Esophagus squamous epithelium (tissue), 5 donors: ENCODE measurements at regions of chr20 and their contacts with region 1.

Region 1: DNA sequence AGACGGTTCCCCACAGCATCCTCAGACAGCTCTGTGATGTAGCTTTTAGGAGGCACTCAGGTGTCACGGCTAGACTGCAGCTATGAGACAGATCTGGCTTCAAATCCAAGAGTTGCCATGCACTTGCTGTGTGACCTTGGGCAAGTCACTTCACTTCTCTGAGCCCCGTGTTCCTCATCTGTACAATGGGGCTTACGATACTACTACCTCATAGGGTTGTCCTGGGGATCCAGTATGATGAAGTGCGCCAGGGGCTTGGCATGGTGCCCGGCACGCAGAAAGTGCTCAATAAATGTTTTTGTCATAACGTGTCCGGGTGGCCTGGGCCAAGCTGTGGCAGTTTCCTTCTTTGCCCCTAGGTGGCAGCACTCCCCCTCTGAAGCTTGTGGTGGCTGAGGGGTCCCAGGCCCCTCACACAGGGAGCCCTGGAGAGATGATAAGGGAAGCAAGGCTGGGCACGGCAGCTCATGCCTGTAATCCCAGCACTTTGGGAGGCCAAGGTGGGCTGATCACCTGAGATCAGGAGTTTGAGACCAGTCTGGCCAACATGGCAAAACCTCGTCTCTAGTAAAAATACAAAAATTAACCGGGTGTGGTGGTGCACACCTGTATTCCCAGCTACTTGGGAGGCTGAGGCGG is 19.1 kb upstream of the CHMP4B start:
- DNase-seq: no peak
- H3K4me3 ChIP-seq: no peak overlapping the region
- H3K27ac ChIP-seq: peak overlapping the region in 1 of 4 donors; percentile 5
- H3K4me1 ChIP-seq: peaks cover 20 to 93% (median 24%) of the 10 kb centered on the region in 3 donors
- H3K27me3 ChIP-seq: no peaks in the 10 kb centered on the region
- CTCF ChIP-seq: peak; percentile 56 to 85 (median 72)
- POLR2A ChIP-seq: no peak

Region 2: DNA sequence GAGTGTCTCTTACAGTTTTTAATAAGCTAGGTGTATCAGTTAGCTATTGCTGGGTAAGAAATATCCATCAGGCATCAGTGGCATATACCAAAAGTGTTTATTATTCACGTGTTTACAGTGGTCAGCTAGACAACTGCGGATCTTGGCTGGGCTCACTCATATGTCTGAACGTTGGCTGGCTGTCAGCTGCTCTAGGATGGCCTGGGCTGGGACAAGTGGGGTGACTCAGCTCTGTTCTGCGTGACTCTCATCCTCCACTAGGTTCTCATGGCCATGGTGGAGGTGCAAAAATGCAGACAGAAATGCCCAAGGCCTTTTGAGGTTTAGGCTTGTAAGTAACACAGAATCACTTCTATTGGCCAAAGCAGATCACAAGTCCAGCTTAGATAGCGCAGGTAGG is 38.3 kb before region 1 on chr20:
- intact Hi-C with region 1: no loop called
- DNase-seq: no peak
- H3K4me3 ChIP-seq: no peak overlapping the region
- H3K27ac ChIP-seq: no peak overlapping the region
- H3K4me1 ChIP-seq: peaks cover 0 to under 1% (median 0%) of the 10 kb centered on the region in 3 donors
- H3K27me3 ChIP-seq: no peaks in the 10 kb centered on the region
- CTCF ChIP-seq: no peak
- POLR2A ChIP-seq: no peak

Region 3: DNA sequence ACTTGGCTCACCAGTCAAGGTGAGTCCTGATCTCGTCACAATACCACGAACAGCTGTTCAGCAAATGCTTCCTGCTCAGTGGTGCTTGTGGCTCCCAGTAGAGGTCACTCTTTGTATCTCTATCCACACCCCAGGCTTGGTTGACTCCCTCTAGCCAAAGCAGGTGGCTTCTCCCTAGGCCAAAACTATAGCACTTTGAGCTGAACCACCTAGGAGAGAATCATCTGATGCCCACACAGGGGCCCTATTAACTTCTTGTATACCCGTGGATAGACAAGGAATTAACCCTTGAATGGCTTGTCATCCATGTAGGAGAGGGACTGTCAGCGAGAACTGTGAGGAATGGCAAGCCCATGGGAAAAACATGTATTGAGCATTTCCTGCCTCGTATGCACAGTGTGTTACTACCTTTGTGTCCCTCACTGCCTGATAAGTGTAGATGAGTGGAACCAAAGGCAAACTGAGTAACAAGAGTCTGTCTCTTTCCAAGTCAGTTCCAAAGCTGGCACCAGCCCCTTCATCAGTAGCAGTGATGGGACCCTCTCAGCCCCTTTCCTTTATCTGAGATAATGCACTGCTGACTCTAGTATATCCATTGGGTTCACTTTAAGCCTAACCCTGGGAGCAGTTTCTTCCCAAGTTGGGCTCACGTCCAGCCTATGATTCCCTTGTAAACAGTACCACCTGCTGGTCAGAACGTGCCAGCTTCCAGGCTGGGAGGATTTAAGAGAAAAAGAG is 277.4 kb after region 1 on chr20:
- intact Hi-C with region 1: loop called (anchors 10 kb)
- DNase-seq: no peak
- H3K4me3 ChIP-seq: no peak overlapping the region
- H3K27ac ChIP-seq: peak overlapping the region in 2 of 4 donors; percentile 57 to 75
- H3K4me1 ChIP-seq: peaks cover 0 to 53% (median 29%) of the 10 kb centered on the region in 3 donors
- H3K27me3 ChIP-seq: no peaks in the 10 kb centered on the region
- CTCF ChIP-seq: peak; percentile 73 to 92 (median 86)
- POLR2A ChIP-seq: no peak